ENCODE measurements at regions of chr10 and their contacts with region 1.

Region 1: GRCh38 chr10:35195361-35196306 is 69.0 kb downstream of the CREM start:
- DNase-seq: peak; percentile 44
- ATAC-seq: peak; percentile 88
- H3K4me3 Mint-ChIP-seq: peak overlapping the region; percentile 92
- H3K27ac Mint-ChIP-seq: peak overlapping the region; percentile 99
- H3K4me1 Mint-ChIP-seq: peaks cover 34% of the 10 kb centered on the region
- H3K27me3 Mint-ChIP-seq: no peaks in the 10 kb centered on the region
- CTCF ChIP-seq: no peak

Region 2: GRCh38 chr10:35027567-35027966 is 168.1 kb before region 1 on chr10:
- CTCF ChIA-PET with region 1: no interaction called
- POLR2A ChIA-PET with region 1: interaction called, 11 read pairs
- intact Hi-C with region 1: no loop called
- DNase-seq: no peak
- ATAC-seq: no peak
- H3K4me3 Mint-ChIP-seq: no peak overlapping the region
- H3K27ac Mint-ChIP-seq: no peak overlapping the region
- H3K4me1 Mint-ChIP-seq: no peaks in the 10 kb centered on the region
- H3K27me3 Mint-ChIP-seq: no peaks in the 10 kb centered on the region
- CTCF ChIP-seq: no peak

Region 3: DNA sequence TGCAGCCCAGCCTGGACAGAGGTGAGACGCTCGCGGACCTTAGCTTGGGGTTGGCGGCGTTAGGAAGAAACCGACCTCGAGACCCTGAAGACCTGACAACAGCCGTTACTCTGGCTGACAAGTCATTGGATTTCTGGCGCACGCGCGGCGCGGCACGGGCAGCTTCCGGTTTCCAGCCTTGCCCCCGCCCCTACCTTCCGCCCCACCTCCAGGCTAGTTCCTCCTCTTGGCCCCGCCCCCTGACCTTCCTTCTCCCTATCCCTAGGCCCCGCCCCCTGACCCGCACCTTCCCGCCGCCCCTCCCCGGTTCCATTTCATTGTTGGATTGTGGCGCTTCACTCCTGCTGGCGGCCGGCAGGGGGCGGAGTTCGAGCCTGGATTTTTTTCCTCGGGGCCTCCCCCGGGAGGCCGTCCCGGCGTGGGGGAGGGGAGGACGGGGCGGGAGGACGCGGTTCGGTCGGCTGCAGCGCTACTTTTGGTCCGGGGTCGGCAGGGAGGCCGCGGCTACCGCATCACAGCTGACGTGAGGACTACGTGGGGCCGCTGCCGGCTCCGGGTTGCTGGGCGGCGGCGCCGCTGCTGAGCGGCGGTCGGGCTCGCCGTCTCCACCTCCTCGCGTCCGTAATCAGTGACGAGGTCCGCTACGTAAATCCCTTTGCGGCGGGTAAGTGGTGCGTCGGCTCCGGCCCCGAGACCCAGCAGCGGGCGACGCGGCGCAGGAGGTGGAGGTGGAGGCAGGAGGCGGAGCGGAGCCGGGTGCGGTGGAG is 68.9 kb before region 1 on chr10 and contains the start of gene CREM:
- CTCF ChIA-PET with region 1: interaction called, 134 read pairs
- POLR2A ChIA-PET with region 1: interaction called, 570 read pairs
- intact Hi-C with region 1: loop called (anchors 1 kb)
- DNase-seq: peak; percentile 96
- ATAC-seq: peak; percentile 85
- H3K4me3 Mint-ChIP-seq: peak within 1 kb of the TSS; percentile 93
- H3K27ac Mint-ChIP-seq: peak within 1 kb of the TSS; percentile 98
- H3K4me1 Mint-ChIP-seq: peaks cover 38% of the 10 kb centered on the region
- H3K27me3 Mint-ChIP-seq: no peaks in the 10 kb centered on the region
- CTCF ChIP-seq: peak; percentile 28
- total RNA-seq, gene CREM: 75.3 and 86.4 TPM in 2 replicates

Region 4: DNA sequence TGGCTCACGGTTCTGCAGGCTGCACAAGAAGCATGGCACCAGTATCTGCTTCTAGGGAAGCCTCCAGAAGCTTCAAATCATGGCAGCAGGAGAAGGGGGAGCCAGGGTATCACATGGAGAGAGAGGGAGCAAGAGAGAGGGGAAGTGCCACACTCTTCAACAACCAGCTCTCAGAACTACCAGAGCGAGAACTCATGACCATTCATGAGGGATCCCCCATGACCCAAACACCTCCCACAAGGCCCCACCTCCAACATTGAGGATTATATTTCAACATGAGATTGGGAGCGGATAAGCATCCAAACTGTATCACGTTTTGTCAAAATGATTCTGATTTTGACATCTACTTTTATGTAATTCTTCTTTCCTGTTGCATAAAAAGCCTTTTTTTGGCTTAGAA is 30.5 kb before region 1 on chr10:
- CTCF ChIA-PET with region 1: interaction called, 10 read pairs
- POLR2A ChIA-PET with region 1: interaction called, 14 read pairs
- intact Hi-C with region 1: no loop called
- DNase-seq: no peak
- ATAC-seq: no peak
- H3K4me3 Mint-ChIP-seq: no peak overlapping the region
- H3K27ac Mint-ChIP-seq: peak overlapping the region; percentile 59
- H3K4me1 Mint-ChIP-seq: peaks cover 5% of the 10 kb centered on the region
- H3K27me3 Mint-ChIP-seq: no peaks in the 10 kb centered on the region
- CTCF ChIP-seq: no peak

Region 5: GRCh38 chr10:35218339-35218955 is 22.8 kb after region 1 on chr10:
- CTCF ChIA-PET with region 1: interaction called, 34 read pairs
- POLR2A ChIA-PET with region 1: interaction called, 18 read pairs
- intact Hi-C with region 1: loop called (anchors 1 kb)
- DNase-seq: peak; percentile 44
- ATAC-seq: peak; percentile 82
- H3K4me3 Mint-ChIP-seq: no peak overlapping the region
- H3K27ac Mint-ChIP-seq: no peak overlapping the region
- H3K4me1 Mint-ChIP-seq: peaks cover 12% of the 10 kb centered on the region
- H3K27me3 Mint-ChIP-seq: peaks cover 9% of the 10 kb centered on the region
- CTCF ChIP-seq: no peak

Region 6: DNA sequence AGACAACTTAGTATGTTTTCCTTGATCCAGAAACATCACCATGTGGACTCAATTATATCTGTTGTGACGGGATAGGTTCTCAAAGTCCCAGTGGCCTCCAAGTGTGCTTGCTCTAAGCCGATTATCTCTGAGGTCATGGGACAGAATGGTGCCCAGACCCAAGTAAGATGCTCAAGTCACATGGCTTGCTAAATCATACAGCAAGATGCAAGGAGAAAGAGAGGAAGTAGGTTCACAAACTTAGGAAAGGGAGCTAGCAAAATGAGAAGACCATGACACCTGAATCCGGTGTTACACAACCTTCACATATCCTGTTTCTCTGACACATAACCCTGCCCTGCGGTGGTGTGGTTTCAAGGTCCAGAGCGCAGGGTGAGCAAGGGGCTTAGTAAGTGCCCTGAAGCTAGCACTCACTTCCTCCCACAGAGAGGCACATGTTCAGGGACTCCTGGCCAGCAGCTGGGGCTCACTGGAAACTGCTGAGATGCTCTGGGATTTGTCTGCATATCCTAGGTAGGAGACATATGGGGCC is 1338.9 kb after region 1 on chr10:
- CTCF ChIA-PET with region 1: no interaction called
- POLR2A ChIA-PET with region 1: no interaction called
- intact Hi-C with region 1: loop called (anchors 1 kb)
- DNase-seq: peak; percentile 55
- ATAC-seq: peak; percentile 99
- H3K4me3 Mint-ChIP-seq: peak overlapping the region; percentile 52
- H3K27ac Mint-ChIP-seq: peak overlapping the region; percentile 50
- H3K4me1 Mint-ChIP-seq: peaks cover 37% of the 10 kb centered on the region
- H3K27me3 Mint-ChIP-seq: no peaks in the 10 kb centered on the region
- CTCF ChIP-seq: no peak